ENCODE measurements at regions of chr16 and their contacts with region 1.

Region 1: DNA sequence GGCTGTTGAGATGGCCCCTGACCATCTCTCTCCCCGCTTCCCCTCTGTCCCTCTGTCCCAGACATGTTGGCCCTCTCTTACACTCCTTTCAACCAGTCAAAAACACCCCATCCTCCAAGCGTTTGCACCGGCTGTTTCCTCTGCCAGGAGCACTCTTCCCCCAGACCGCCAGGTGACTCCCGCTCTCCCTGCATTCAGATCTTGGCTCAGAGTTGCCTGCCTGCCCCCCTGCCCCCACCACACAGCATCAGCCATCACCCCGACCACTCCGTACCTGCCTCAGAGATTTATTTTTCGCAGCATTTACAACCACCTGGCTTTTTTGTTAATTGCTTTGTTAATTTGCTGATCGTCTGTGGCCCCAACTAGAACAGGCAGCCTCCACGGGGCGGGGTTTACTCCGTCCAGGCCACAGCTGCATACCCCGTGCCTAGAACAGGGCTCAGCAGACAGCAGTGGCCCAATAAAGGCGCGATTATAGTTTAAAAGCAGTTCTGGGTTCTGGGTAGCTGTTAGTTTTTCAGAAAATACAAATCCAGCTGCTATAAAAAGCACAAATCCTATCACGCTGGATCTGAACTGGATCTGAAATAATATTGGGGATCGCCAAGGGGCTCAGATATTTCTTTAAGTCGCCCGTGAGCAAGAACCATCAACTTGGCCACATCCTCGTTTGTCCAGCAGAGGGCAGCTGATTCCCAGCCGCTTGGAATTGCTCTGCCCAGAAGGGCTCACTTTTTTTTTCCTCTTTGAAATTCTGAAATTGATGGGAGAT is 173.6 kb downstream of the IRF8 start:
- DNase-seq: no peak
- ATAC-seq: peak in 1 of 2 donors; percentile 68
- H3K4me3 ChIP-seq: no peak overlapping the region
- H3K27ac ChIP-seq: peak overlapping the region; percentile 51
- H3K4me1 ChIP-seq: peaks cover 32% of the 10 kb centered on the region
- H3K27me3 ChIP-seq: peaks cover 19% of the 10 kb centered on the region
- CTCF ChIP-seq: peak; percentile 83

Region 2: DNA sequence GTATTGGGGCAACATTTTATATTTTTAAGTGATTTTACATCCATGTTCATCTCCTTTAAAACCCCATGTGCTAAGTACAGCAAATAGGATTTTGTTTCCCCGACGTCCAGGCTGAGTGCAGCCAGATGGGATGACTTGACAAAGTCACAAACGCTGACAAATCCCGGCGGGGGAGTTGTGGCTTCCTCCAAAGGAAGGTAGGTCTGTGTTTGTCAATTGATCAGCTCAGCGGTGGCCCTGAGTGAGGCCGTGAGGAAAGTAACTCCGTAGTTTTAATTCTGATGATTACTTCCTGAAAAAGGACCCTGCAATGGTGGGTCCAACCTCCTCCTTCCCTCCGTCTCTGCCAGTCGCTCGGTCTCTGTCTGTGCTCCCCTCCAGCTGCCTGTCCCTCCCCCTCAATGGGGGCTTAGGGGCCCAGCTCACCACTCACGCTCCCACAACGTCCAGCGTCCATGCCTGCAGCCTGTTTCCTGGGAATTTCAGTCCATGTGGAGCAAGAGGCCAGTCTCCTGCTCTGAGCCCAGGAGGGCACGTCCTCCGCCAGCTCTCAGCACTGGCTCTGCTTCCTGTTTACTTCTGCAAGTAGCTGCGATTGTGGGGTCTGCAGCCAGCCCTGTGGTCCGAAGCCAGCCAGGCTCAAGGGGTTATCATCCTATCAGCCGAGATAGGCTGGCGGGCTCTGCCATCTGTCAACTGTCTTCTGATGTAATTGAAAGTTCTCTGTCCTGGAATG is 228.4 kb after region 1 on chr16:
- intact Hi-C with region 1: no loop called
- DNase-seq: no peak
- ATAC-seq: no peak
- H3K4me3 ChIP-seq: peak overlapping the region; percentile 33
- H3K27ac ChIP-seq: peak overlapping the region; percentile 66
- H3K4me1 ChIP-seq: peaks cover 8% of the 10 kb centered on the region
- H3K27me3 ChIP-seq: peaks cover 36% of the 10 kb centered on the region
- CTCF ChIP-seq: no peak

Region 3: DNA sequence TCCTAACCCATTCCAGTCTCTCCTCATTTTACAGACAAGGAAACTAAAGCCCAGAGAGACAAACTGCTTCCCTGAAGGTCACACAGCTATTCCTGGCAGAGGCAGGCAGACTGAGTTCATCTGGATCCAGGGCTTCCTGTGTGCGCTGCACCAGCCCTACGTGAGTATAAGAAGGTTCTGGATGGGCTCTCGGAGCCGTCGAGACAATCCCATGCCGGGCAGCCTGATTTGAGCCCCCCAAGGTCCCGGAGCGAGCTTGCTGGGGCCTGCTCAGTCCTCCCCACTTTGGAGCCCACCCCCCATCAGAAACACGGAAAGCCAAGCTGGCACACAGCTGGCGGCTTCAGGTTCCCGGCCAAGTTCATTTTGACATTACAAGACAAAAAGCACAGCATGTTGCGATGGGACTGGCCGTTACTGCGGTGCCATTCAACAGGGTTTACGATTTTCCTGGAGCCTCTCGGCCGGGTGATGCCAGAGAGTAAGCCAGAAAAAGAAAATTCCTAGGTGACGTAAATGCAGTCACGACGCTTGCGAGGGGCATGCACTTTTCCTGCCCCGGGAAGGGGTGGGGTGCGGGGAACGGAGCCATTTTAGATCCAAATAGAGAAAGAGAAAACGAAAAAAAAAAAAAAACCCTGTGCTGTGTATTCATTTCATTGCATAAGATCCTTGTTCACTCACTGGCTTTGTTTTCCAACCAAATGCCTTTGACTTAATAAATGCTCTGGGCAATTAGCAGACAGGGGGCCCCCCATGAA is 270.7 kb after region 1 on chr16:
- intact Hi-C with region 1: no loop called
- DNase-seq: no peak
- ATAC-seq: peak; percentile 48 to 57
- H3K4me3 ChIP-seq: peak overlapping the region; percentile 24
- H3K27ac ChIP-seq: peak overlapping the region; percentile 81
- H3K4me1 ChIP-seq: peaks cover 15% of the 10 kb centered on the region
- H3K27me3 ChIP-seq: peaks cover 13% of the 10 kb centered on the region
- CTCF ChIP-seq: no peak

Region 4: DNA sequence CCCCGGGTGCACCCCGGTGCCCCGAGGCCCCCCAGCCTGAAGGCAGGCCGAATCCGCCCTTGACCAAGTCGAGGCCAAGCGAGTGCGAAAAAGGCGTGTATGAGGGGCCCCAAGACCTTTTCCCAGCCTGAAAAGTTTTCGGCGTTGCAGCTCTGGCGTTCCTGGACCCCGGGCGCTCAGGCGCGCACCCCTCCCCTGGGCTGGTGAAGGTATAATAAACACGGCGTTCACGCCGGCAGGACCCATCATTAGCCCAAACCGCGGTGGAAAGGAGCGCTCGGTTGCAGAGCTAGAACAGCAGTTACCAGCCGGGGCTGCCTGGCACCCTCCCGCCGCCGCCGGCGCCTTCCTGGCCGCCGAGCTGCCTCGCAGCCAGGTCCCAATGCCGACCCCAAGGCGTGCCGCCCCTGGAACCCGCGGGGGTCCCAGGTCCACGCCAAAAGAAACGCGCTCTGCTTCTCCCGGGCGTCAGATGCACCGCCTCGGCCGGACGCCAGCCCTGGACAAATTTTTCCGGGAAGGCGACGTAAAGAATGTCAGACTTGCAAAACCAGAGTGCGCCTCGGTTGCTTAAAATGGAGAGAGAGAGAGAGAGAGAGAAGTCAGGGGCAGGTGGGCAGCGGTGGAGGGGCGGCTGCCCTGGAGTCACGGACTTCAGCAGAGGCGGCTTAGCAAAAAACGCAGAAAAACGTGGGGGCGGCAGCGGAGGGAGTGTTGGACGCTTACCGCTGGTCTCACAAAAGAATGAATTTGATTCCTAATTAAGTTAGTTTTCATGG is 426.3 kb after region 1 on chr16:
- intact Hi-C with region 1: loop called (anchors 10 kb)
- DNase-seq: no peak
- ATAC-seq: no peak
- H3K4me3 ChIP-seq: peak overlapping the region; percentile 45
- H3K27ac ChIP-seq: peak overlapping the region; percentile 78
- H3K4me1 ChIP-seq: no peaks in the 10 kb centered on the region
- H3K27me3 ChIP-seq: peaks cover 95% of the 10 kb centered on the region
- CTCF ChIP-seq: no peak

Measured in lower lobe of right lung (tissue), 2 donors.